AG04450 (cell line): ENCODE measurements at regions of chr6 and their contacts with region 1.

Region 1: GRCh38 chr6:7238900-7239589 is 74.0 kb downstream of the SSR1 start:
- DNase-seq: no peak
- H3K4me3 ChIP-seq: no peak overlapping the region
- H3K27ac ChIP-seq: no peak overlapping the region
- H3K27me3 ChIP-seq: no peaks in the 10 kb centered on the region
- CTCF ChIP-seq: peak; percentile 58

Region 2: DNA sequence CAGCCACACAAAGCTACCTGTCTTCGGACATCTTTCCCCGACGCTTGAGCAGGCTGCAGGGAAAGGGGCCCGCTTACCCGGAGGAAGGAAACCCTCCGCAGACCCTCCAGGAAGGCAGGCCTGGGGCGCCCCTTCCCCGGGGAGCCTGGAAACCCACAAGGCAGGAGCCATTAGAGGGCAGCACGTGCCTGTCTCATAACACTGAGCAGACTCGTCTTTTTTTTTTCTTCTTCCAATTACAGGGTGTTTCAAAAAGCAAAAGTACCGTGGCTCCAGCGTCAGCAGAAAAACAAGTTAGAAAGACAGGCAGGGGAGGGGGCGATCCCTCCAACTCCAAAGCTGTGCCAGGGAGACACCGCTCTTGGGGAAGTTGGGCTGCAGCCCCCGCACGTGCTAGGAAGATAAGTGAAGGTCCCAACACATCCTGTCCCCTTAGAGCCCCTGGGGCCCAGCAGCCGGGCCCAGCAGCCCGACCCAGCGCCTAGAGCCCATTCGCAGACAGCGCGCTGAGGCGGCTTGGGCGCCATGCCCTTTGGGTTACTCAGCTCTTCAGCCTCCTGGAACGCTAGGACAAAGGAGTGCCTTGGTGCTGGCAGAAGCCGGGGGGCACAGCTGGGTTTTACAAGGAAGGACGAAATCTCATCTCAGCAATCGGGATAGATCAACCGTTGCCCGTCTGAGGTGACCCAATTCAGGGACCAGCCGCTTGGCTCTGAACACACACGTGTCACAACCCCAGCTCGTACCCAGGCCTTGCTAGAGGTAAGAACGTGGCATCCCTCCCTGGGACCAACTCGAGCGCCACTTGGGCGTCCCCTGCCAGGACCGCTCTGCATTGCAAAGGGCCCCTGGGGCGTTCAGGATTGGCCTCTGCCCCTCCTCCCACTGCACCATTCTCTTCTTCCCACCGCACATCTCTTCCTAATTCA is 514.2 kb before region 1 on chr6:
- CTCF ChIA-PET with region 1: interaction called, 95 read pairs
- POLR2A ChIA-PET with region 1: interaction called, 3 read pairs
- DNase-seq: peak; percentile 45
- H3K4me3 ChIP-seq: peak overlapping the region; percentile 50
- H3K27ac ChIP-seq: peak overlapping the region; percentile 47
- H3K27me3 ChIP-seq: peaks cover 6% of the 10 kb centered on the region
- CTCF ChIP-seq: peak; percentile 69

Region 3: GRCh38 chr6:6758915-6759654 is 480.0 kb before region 1 on chr6:
- CTCF ChIA-PET with region 1: interaction called, 30 read pairs
- POLR2A ChIA-PET with region 1: no interaction called
- DNase-seq: peak; percentile 16
- H3K4me3 ChIP-seq: peak overlapping the region; percentile 25
- H3K27ac ChIP-seq: no peak overlapping the region
- H3K27me3 ChIP-seq: peaks cover 2% of the 10 kb centered on the region
- CTCF ChIP-seq: peak; percentile 69

Region 4: GRCh38 chr6:7080311-7080710 is 158.7 kb before region 1 on chr6:
- CTCF ChIA-PET with region 1: no interaction called
- POLR2A ChIA-PET with region 1: no interaction called
- DNase-seq: no peak
- H3K4me3 ChIP-seq: no peak overlapping the region
- H3K27ac ChIP-seq: no peak overlapping the region
- H3K27me3 ChIP-seq: no peaks in the 10 kb centered on the region
- CTCF ChIP-seq: no peak

Region 5: GRCh38 chr6:7249946-7250643 is 11.1 kb after region 1 on chr6:
- CTCF ChIA-PET with region 1: interaction called, 27 read pairs
- POLR2A ChIA-PET with region 1: no interaction called
- DNase-seq: no peak
- H3K4me3 ChIP-seq: no peak overlapping the region
- H3K27ac ChIP-seq: peak overlapping the region; percentile 21
- H3K27me3 ChIP-seq: no peaks in the 10 kb centered on the region
- CTCF ChIP-seq: no peak

Region 6: GRCh38 chr6:7402716-7403115 is 163.7 kb after region 1 on chr6:
- CTCF ChIA-PET with region 1: no interaction called
- POLR2A ChIA-PET with region 1: no interaction called
- DNase-seq: no peak
- H3K4me3 ChIP-seq: no peak overlapping the region
- H3K27ac ChIP-seq: no peak overlapping the region
- H3K27me3 ChIP-seq: no peaks in the 10 kb centered on the region
- CTCF ChIP-seq: no peak